HEK293 (cell line): ENCODE measurements at regions of chr10 and their contacts with region 1.

Region 1: DNA sequence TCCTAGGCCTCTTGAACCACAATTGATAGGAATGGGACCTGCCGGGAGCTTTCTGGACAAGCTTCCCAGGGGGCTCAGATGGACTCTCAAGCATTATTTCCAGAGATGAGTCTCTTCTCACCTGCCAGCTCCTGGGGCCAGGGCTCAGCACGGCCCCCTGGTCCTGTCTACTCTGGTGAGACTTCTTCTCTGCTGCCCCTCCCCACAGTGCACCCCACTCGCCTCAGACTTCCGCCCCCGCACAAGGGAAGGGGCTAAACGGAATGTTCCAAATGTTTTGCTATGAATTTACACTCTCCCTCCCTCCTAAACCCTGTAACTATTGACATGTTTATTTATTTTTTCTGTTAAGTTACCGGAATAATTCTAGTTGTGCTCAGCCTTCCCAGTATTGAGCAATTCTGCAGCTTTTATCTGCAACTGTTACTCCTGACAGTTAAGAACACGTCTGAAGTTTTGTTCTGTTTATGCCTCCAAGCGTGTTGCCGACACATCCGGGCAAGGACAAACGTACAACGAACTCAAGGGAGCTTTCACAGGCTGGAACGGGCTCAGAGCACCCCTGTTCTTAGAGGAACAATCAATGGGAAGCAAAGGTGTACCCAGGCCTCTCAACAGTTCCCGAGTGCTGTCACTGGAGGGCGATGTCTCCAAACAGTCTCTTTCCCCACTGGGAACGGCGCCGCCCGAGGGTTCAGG is 55.2 kb downstream of the FHIP2A start:
- H3K4me3 ChIP-seq: no peak overlapping the region
- H3K27ac ChIP-seq: no peak overlapping the region
- H3K4me1 ChIP-seq: peaks cover 8% of the 10 kb centered on the region
- CTCF ChIP-seq: peak; percentile 78

Region 2: GRCh38 chr10:114862456-114862855 is 14.3 kb before region 1 on chr10:
- CTCF ChIA-PET with region 1: interaction called, 13 read pairs
- POLR2A ChIA-PET with region 1: no interaction called
- H3K4me3 ChIP-seq: no peak overlapping the region
- H3K27ac ChIP-seq: no peak overlapping the region
- H3K4me1 ChIP-seq: no peaks in the 10 kb centered on the region
- CTCF ChIP-seq: no peak

Region 3: GRCh38 chr10:114893251-114893650 is 16.5 kb after region 1 on chr10:
- CTCF ChIA-PET with region 1: interaction called, 10 read pairs
- POLR2A ChIA-PET with region 1: no interaction called
- H3K4me3 ChIP-seq: no peak overlapping the region
- H3K27ac ChIP-seq: no peak overlapping the region
- H3K4me1 ChIP-seq: no peaks in the 10 kb centered on the region
- CTCF ChIP-seq: no peak

Region 4: GRCh38 chr10:115129752-115130151 is 253.0 kb after region 1 on chr10:
- CTCF ChIA-PET with region 1: interaction called, 87 read pairs
- POLR2A ChIA-PET with region 1: no interaction called
- H3K4me3 ChIP-seq: no peak overlapping the region
- H3K27ac ChIP-seq: no peak overlapping the region
- H3K4me1 ChIP-seq: no peaks in the 10 kb centered on the region
- CTCF ChIP-seq: no peak